ENCODE measurements at regions of chr4 and their contacts with region 1.

Region 1: DNA sequence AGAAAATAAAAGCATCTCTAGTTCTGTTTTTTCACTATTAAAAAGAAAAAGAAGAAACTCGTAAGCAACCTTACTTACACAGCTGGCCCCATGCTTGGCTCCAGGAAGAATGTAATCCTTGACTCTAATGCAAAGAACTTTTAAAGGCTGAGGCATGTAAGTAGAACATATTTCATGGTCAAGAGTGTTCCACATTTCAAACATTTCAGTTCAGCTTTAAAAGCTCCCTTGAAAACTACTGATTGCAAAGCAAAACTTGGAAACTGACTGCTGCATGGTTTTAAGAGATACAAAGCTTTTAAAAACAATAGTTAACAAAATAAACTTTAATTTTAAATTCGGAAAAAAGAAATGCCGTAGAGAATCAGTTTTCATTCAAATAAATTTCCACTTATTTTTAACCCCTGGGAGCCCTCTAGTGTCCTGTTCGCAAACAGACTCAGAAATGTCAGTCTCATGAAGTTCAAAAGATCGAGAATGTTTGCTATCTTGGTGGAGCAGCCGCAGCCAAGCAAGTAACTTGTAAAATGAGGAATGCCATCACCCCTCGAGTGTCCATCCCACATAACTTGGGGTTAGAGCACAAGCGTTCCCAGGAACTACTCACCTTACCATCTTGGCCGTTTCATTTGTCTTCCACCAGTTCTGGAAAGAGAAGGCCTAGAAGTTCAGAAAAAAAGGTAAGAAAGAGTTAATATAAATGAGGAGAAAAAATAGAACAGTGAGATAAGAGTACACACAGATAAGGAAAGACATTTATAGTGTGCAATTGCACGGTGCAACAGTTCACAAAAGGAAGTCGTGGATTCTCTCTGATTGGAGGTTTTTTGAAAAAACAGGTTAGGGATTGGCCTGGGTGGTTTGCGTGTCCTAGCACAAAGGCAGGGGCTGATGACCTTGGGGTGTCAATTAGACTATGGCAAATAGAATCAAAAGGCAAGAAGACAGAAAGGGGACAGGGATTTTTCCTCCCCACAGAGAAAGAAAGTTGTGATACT is at the start of gene GASK1B:
- DNase-seq: no peak
- ATAC-seq: peak; percentile 58
- H3K4me3 ChIP-seq: peak within 1 kb of the TSS; percentile 52
- H3K27ac ChIP-seq: peak within 1 kb of the TSS; percentile 61
- H3K4me1 ChIP-seq: peaks cover 14% of the 10 kb centered on the region
- H3K27me3 ChIP-seq: no peaks in the 10 kb centered on the region
- CTCF ChIP-seq: peak; percentile 58
- total RNA-seq, gene GASK1B: 37.3 TPM

Region 2: DNA sequence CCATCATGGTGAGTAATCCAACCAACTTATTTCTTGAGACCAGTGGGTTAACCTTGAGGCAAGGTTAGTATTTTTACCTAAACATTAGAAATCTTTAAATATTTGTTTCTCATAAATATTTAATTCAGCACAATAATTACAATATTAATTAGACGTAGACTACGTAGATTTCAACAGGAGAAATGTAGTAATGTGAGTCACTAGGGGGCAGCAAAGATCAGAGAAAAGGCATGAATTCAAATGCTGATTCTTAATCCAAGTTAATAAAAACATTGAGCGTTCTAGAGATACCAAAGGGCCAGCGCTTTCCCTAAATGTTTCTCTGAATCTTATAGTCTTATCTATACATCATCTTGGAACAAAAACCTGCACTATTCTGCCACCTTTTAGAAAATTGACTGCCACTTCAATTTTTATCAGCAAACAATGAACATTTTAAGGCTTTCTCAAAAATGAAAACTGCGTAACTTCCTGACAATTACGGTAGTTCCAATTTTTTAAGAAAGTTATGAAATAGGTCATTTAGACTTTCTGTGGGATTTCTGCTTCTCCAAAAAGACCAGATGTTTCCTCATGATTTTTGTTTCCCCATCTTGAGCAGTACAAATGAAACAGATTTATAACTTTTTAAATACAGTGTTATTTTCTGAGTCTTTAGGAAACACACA is 180.4 kb before region 1 on chr4:
- intact Hi-C with region 1: loop called (anchors 10 kb)
- DNase-seq: no peak
- ATAC-seq: peak; percentile 88
- H3K4me3 ChIP-seq: peak overlapping the region; percentile 43
- H3K27ac ChIP-seq: peak overlapping the region; percentile 79
- H3K4me1 ChIP-seq: peaks cover 15% of the 10 kb centered on the region
- H3K27me3 ChIP-seq: no peaks in the 10 kb centered on the region
- CTCF ChIP-seq: peak; percentile 73

Measured in upper lobe of right lung (tissue), 1 donor.